ENCODE measurements at regions of chr2 and their contacts with region 1.

Region 1: DNA sequence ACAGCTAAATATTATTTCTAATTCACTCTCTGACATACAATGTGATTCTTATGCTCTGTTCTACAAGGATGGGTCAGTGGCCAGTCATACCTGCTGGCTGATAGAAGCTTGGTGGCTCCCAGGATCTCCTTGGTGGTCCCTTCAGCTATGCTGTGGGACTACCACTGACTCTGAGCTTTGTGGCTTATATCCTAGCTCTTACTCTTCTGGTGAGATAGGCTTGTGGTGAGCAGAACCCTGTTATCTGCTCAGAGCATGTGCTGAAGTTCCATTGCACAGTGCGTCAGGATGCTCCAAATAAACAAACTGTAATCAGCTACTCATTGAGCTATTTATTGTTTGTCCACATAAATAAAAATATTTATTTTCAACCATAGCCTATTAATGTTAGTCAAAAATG is 51.7 kb downstream of the MFSD6 start:
- DNase-seq: no peak
- H3K4me3 ChIP-seq: no peak overlapping the region
- H3K4me3 Mint-ChIP-seq: peak overlapping the region in 1 of 7 donors; percentile 17
- H3K27ac ChIP-seq: no peak overlapping the region
- H3K27ac Mint-ChIP-seq: peak overlapping the region in 1 of 8 donors; percentile 19
- H3K4me1 ChIP-seq: peaks cover 50% of the 10 kb centered on the region
- H3K4me1 Mint-ChIP-seq: peaks cover 69 to 88% (median 87%) of the 10 kb centered on the region in 3 donors
- H3K27me3 ChIP-seq: no peaks in the 10 kb centered on the region
- H3K27me3 Mint-ChIP-seq: no peaks in the 10 kb centered on the region

Region 2: DNA sequence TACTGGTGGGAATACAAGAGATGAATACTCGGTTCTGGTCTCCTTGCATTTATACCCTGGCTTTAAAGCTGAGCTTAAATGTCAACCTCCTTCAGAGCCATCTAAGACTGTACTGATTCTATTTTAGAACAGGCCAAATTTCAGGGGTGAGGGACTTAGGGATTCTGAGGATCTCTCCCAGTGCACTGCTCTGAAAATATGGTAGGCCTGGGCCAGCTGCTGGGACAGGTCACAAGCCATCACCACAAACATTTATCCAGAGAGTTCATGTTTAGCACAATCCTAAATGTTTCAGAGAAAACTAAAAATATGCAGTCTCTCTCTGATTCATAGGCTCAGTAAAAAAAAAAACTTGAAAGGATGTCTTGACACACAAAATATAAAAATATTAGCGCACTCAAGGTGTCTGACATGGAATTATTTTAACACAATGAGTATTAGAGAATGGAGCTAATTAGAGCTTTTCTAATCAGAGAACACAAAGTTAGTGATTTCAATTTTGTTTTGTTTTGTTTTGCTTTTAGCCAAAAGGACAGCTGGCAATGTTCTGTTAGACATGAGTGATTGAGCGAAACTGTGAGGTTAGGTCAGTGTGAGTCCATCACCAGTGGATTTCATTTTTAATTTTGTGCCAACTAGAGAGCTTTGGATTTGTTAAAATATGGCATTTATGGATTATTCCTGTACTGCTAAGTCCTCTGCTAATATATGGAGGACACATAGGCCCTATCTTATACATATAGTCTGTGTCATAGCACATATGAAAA is 12.9 kb before region 1 on chr2:
- CTCF ChIA-PET with region 1: interaction called, 10 read pairs
- POLR2A ChIA-PET with region 1: no interaction called
- DNase-seq: no peak
- H3K4me3 ChIP-seq: no peak overlapping the region
- H3K4me3 Mint-ChIP-seq: peak overlapping the region in 1 of 7 donors; percentile 49
- H3K27ac ChIP-seq: no peak overlapping the region
- H3K27ac Mint-ChIP-seq: peak overlapping the region in 4 of 8 donors; percentile 27 to 45 (median 30)
- H3K4me1 ChIP-seq: peaks cover 57% of the 10 kb centered on the region
- H3K4me1 Mint-ChIP-seq: peaks cover 68 to 89% (median 81%) of the 10 kb centered on the region in 3 donors
- H3K27me3 ChIP-seq: no peaks in the 10 kb centered on the region
- H3K27me3 Mint-ChIP-seq: no peaks in the 10 kb centered on the region

Region 3: GRCh38 chr2:191178806-191179514 is 719.1 kb after region 1 on chr2:
- CTCF ChIA-PET with region 1: no interaction called
- POLR2A ChIA-PET with region 1: no interaction called
- DNase-seq: no peak
- H3K4me3 ChIP-seq: no peak overlapping the region
- H3K4me3 Mint-ChIP-seq: no peak overlapping the region
- H3K27ac ChIP-seq: no peak overlapping the region
- H3K27ac Mint-ChIP-seq: no peak overlapping the region
- H3K4me1 ChIP-seq: no peaks in the 10 kb centered on the region
- H3K4me1 Mint-ChIP-seq: peaks cover 5 to 15% (median 10%) of the 10 kb centered on the region in 3 donors
- H3K27me3 ChIP-seq: no peaks in the 10 kb centered on the region
- H3K27me3 Mint-ChIP-seq: no peaks in the 10 kb centered on the region